ENCODE measurements at regions of chr6 and their contacts with region 1.

Region 1: DNA sequence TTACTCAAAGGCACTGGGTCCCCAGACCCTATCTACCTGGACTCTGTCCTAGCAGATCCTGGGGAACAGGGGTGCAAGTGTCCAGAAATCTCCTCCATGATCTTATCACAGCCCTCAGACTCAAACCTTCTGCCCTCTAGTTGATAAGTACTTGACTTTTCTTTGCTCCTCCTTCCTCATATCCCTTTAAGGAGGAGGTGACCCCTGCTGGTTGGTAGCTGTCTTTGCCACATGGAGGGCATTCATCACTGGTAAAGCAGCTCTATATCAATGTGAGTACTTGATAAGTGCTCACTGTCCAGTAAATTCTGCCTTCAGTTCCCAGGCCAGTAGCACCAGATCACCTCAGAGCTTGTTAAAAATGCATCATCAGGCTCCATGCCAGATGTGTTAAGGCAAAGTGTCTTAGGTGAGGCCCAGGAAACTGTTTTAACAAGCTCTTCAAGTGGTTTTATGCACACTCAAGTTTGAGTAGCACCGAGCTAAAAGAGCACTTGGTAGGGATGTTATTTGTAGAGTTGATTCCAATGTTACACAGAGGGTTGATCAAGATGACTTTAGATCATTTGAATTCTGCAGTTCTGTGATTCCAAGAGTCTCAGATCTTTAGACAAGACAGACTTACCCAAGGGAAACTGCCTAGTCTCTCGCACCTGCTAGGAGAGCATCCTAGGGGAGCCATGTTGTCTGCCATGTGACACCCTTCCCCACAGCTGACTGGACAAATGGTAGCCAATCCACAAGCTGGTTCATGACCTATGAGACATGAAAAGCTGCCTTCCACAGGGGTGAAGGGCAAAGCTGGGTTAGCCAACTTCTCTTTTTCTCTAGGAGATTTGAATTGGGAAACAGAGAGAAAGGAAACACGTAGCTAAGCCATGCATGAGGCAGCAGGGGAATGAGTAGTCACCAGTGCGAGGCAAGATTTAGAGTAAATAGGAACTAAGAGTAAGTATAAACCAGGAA is 18.6 kb downstream of the TREML2 start:
- DNase-seq: peak; percentile 62
- ATAC-seq: peak; percentile 98
- H3K4me3 ChIP-seq: no peak overlapping the region
- H3K27ac ChIP-seq: no peak overlapping the region
- H3K4me1 ChIP-seq: no peaks in the 10 kb centered on the region
- H3K27me3 ChIP-seq: peaks cover 40% of the 10 kb centered on the region
- CTCF ChIP-seq: peak; percentile 71

Region 2: DNA sequence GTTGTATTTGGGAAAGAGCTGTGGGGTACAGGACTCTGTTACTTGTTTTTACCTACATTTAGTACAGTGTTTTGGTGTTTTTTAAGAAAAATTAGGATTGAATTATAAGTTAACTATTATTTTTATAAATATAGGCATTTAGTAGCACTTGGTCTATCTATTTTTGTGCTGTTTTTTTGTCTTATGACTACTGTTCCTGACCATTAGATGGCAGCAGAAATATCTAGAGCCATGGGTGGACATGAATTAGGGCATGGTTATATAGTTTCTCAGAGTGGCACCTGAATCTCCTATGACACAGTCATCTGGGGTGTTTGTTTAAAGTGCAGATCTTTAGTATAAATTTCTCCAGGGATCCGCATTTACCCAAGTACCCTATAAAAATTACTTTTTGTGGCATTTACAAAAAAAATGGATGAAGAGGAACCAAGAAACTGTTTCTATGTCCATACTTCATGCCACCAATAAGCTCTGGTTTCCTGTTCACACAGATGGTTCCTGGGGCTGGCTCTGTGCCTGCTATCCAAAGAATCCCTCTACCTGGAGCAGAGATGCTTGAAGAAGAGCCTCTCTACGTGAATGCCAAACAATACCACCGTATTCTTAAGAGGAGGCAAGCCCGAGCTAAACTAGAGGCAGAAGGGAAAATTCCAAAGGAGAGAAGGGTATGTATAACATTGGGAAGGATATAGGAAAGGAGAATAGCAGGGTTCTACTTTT is 89.8 kb before region 1 on chr6:
- CTCF ChIA-PET with region 1: no interaction called
- POLR2A ChIA-PET with region 1: no interaction called
- intact Hi-C with region 1: loop called (anchors 2 kb)
- DNase-seq: peak; percentile 41
- ATAC-seq: peak; percentile 51; the same call in 1 of the 2 replicates
- H3K4me3 ChIP-seq: no peak overlapping the region
- H3K27ac ChIP-seq: no peak overlapping the region
- H3K4me1 ChIP-seq: no peaks in the 10 kb centered on the region
- H3K27me3 ChIP-seq: no peaks in the 10 kb centered on the region
- CTCF ChIP-seq: peak; percentile 51